ENCODE measurements at regions of chr12 and their contacts with region 1.

Region 1: GRCh38 chr12:89709157-89709994 is 738 bp upstream of the ATP2B1 start:
- DNase-seq: peak; percentile 95
- ATAC-seq: peak; percentile 76
- H3K4me3 ChIP-seq: peak overlapping the region; percentile 94
- H3K27ac ChIP-seq: peak overlapping the region; percentile 95
- H3K4me1 ChIP-seq: peaks cover 3% of the 10 kb centered on the region; the same call in 1 of the 2 replicates
- H3K27me3 ChIP-seq: no peaks in the 10 kb centered on the region
- CTCF ChIP-seq: 0 out of 6 replicates have a peak, but pooled peaks of 1 of the 3 experiments have one; percentile 10
- EP300 ChIP-seq: peak in 1 of 2 experiments; percentile 41; a peak in 3 of 4 replicates
- POLR2A ChIP-seq: peak; percentile 96
- RAD21 ChIP-seq: 0 out of 2 replicates have a peak, but pooled peaks have one; percentile 0

Region 2: DNA sequence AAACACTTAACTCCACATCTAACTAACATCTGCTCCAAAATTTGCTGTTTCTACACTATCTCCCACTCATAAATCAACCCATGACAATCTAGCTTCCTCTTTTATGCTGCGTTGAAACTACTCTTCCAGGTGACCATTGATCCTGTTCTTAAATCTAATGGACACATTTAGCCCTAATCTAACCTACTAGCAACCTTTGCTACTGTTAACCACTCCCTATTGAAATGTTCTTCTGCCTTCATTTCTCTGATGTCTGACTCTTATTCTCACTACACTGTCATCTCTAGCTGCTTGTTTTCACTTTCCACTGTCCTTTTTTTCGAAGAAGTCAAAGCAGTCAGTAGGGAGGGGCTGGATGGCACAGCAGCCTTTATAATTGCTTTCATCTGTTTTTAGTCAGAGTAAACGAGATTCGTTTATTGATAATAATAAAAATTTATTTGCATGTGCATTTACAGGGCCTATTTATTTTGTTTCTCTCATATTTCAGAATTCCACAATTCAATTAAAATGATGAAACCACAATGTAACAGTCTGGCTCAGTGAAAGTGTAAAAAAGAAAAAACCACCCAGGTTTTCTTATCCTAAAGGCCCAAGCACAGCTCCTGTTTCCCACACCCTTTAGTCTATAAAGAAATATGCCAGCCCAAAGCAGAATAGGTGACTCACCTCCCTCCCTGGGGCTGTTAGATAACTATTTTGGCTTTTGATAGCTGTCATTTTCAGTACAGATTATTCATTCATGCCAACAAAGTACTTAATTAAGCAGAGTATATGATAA is 45.6 kb before region 1 on chr12:
- CTCF ChIA-PET with region 1: interaction called, 7 read pairs
- POLR2A ChIA-PET with region 1: interaction called, 6 read pairs
- RAD21 ChIA-PET with region 1: interaction called, 26 read pairs
- SMC1A ChIA-PET with region 1: interaction called, 70 read pairs
- in situ Hi-C with region 1: no loop called
- intact Hi-C with region 1: loop called (anchors 2 kb)
- DNase-seq: peak; percentile 37
- ATAC-seq: peak; percentile 79
- H3K4me3 ChIP-seq: peak overlapping the region; percentile 3; the same call in 1 of the 2 replicates
- H3K27ac ChIP-seq: peak overlapping the region; percentile 5; the same call in 1 of the 2 replicates
- H3K4me1 ChIP-seq: peaks cover 26% of the 10 kb centered on the region; the same call in 1 of the 2 replicates
- H3K27me3 ChIP-seq: no peaks in the 10 kb centered on the region
- CTCF ChIP-seq: no peak
- EP300 ChIP-seq: no peak
- POLR2A ChIP-seq: no peak
- RAD21 ChIP-seq: no peak

Region 3: DNA sequence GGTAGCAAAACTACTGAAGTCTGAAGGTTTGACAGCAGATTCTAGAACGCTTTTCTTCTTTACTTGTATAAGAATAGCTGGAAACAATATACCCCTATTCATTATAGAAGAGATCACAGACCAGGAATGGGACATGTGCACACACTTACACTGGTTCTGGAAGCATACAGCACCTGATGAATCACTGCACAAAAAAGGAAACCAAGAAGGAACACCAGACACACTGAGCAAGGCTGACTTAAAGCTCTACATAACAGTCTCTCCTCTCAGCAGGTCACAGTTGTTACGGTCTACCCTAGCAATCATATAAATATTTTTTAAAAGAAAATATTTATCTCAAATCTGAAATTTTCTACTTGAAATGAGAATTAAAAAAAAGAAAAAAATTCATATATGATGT is 14.3 kb before region 1 on chr12:
- CTCF ChIA-PET with region 1: interaction called, 18 read pairs
- POLR2A ChIA-PET with region 1: interaction called, 12 read pairs
- RAD21 ChIA-PET with region 1: interaction called, 41 read pairs
- SMC1A ChIA-PET with region 1: interaction called, 31 read pairs
- in situ Hi-C with region 1: no loop called
- intact Hi-C with region 1: no loop called
- DNase-seq: no peak
- ATAC-seq: peak; percentile 18
- H3K4me3 ChIP-seq: no peak overlapping the region
- H3K27ac ChIP-seq: no peak overlapping the region
- H3K4me1 ChIP-seq: peaks cover 9% of the 10 kb centered on the region
- H3K27me3 ChIP-seq: no peaks in the 10 kb centered on the region
- CTCF ChIP-seq: no peak
- EP300 ChIP-seq: no peak
- POLR2A ChIP-seq: no peak
- RAD21 ChIP-seq: no peak

Region 4: DNA sequence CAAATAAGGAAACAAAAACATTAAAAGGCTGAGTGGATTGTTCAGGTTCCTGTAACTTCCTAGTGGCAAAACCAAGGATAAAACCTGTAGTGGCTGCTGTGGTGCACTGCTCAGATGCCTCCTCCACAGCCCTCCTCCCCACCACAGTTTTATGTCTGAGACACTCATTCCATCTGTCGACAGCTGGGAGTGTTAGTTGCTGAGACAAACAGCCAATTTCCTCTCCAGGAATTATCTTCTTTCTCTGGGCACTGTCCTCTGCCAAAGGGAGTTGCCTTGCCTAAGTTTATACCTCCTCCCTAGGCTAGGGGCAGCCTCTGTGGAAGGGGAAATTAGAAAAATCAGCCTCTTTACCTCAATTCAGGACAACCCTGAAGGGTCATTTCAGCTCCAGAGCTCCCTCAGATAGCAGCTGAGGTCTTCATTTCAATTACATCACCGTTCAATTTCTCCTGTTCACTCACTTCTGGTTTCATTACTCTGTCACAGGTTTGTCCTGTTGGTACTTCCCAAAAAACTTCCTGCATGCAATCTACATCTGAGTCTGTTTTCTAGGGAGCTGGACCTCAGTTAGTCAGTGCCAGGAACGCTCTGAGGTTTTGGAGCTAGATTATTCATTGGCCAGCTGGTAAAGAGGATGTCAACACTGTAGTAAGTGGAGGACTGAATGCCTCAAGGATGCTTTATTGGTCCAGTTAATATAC is 74.1 kb after region 1 on chr12:
- CTCF ChIA-PET with region 1: no interaction called
- POLR2A ChIA-PET with region 1: no interaction called
- RAD21 ChIA-PET with region 1: no interaction called
- SMC1A ChIA-PET with region 1: no interaction called
- in situ Hi-C with region 1: no loop called
- intact Hi-C with region 1: no loop called
- DNase-seq: no peak
- ATAC-seq: peak; percentile 66
- H3K4me3 ChIP-seq: no peak overlapping the region
- H3K27ac ChIP-seq: no peak overlapping the region
- H3K4me1 ChIP-seq: peaks cover 4% of the 10 kb centered on the region
- H3K27me3 ChIP-seq: no peaks in the 10 kb centered on the region
- CTCF ChIP-seq: no peak
- EP300 ChIP-seq: no peak
- POLR2A ChIP-seq: no peak
- RAD21 ChIP-seq: no peak

Region 5: DNA sequence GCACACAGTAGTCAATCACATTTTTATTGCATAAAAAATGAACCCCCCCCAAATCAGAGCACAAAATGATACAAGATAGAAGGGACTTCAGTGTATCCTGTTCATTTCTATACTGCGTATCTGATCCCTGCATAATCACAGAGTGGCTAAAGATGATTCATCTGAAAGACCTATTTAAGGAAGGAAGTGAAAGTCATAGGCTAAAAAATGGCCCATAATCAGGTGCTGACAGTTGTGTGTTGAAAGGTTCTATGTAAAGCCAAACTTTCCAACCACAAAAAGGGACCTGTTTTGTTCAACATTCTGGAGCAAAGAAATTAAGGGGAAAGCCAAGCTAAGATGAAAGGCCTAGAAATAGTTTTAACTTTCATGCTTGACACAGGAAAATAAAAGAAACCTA is 147.1 kb after region 1 on chr12:
- CTCF ChIA-PET with region 1: interaction called, 6 read pairs
- POLR2A ChIA-PET with region 1: interaction called, 11 read pairs
- RAD21 ChIA-PET with region 1: interaction called, 13 read pairs
- SMC1A ChIA-PET with region 1: interaction called, 5 read pairs
- in situ Hi-C with region 1: no loop called
- intact Hi-C with region 1: loop called (anchors 1 kb)
- DNase-seq: peak; percentile 85
- ATAC-seq: peak; percentile 90
- H3K4me3 ChIP-seq: no peak overlapping the region
- H3K27ac ChIP-seq: peak overlapping the region; percentile 42
- H3K4me1 ChIP-seq: peaks cover 43% of the 10 kb centered on the region
- H3K27me3 ChIP-seq: no peaks in the 10 kb centered on the region
- CTCF ChIP-seq: no peak
- EP300 ChIP-seq: peak; percentile 97
- POLR2A ChIP-seq: no peak
- RAD21 ChIP-seq: peak; percentile 27; the same call in 1 of the 2 replicates

Region 6: GRCh38 chr12:89927226-89927698 is 217.9 kb after region 1 on chr12:
- CTCF ChIA-PET with region 1: interaction called, 9 read pairs
- POLR2A ChIA-PET with region 1: interaction called, 18 read pairs
- RAD21 ChIA-PET with region 1: interaction called, 24 read pairs
- SMC1A ChIA-PET with region 1: interaction called, 17 read pairs
- in situ Hi-C with region 1: no loop called
- intact Hi-C with region 1: loop called (anchors 2 kb)
- DNase-seq: peak; percentile 79
- ATAC-seq: peak; percentile 91
- H3K4me3 ChIP-seq: peak overlapping the region; percentile 67
- H3K27ac ChIP-seq: peak overlapping the region; percentile 96
- H3K4me1 ChIP-seq: peaks cover 3% of the 10 kb centered on the region; the same call in 1 of the 2 replicates
- H3K27me3 ChIP-seq: no peaks in the 10 kb centered on the region
- CTCF ChIP-seq: no peak
- EP300 ChIP-seq: peak; percentile 85 to 97; a peak in 3 of 4 replicates
- POLR2A ChIP-seq: no peak
- RAD21 ChIP-seq: peak; percentile 29; the same call in 1 of the 2 replicates

Region 7: DNA sequence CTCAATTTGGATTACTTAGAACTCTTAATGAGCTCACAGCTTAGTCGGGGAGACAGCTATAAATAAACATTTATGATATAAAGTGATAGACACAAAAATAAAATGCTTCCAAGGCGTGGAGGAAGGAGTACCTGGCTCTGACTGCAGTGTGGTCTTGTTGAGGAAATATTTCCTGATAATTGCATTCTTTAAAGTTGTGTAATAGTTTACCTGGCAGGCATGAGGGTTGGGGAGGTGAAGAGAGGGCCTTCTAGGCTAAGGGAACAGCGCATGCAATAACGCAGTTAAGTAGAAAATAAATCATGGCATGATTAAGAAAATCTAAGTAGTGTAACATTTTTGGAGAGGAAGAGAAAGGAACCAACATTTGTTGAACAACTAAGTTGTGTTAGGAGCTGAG is 259.7 kb after region 1 on chr12:
- CTCF ChIA-PET with region 1: no interaction called
- POLR2A ChIA-PET with region 1: no interaction called
- RAD21 ChIA-PET with region 1: no interaction called
- SMC1A ChIA-PET with region 1: no interaction called
- in situ Hi-C with region 1: no loop called
- intact Hi-C with region 1: no loop called
- DNase-seq: no peak
- ATAC-seq: no peak
- H3K4me3 ChIP-seq: no peak overlapping the region
- H3K27ac ChIP-seq: no peak overlapping the region
- H3K4me1 ChIP-seq: no peaks in the 10 kb centered on the region
- H3K27me3 ChIP-seq: no peaks in the 10 kb centered on the region
- CTCF ChIP-seq: no peak
- EP300 ChIP-seq: no peak
- POLR2A ChIP-seq: no peak
- RAD21 ChIP-seq: no peak

Region 8: DNA sequence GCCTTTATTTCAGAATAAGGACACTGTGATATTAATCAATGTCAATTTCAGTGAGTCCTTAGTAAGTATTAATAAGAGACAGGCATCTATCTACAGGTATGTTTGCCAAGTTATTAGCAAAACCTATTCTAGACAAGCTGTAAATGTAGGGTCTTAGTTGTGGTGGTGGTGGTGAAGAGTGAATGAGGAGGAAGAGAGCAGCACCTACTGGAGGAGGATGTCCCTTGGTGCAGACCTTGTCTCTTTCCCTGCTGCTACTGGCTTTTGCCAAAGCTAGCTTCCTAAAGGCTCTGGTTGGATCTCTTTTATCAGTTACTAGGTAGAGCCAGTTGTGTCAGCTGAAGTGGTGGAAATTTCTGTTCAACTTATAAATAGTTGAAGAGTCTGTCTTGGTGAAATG is 304.0 kb after region 1 on chr12:
- CTCF ChIA-PET with region 1: interaction called, 5 read pairs
- POLR2A ChIA-PET with region 1: interaction called, 7 read pairs
- RAD21 ChIA-PET with region 1: interaction called, 18 read pairs
- SMC1A ChIA-PET with region 1: interaction called, 21 read pairs
- in situ Hi-C with region 1: no loop called
- intact Hi-C with region 1: loop called (anchors 5 kb)
- DNase-seq: peak; percentile 8
- ATAC-seq: peak; percentile 94
- H3K4me3 ChIP-seq: no peak overlapping the region
- H3K27ac ChIP-seq: no peak overlapping the region
- H3K4me1 ChIP-seq: no peaks in the 10 kb centered on the region
- H3K27me3 ChIP-seq: no peaks in the 10 kb centered on the region
- CTCF ChIP-seq: peak; percentile 45 to 73 (median 54); a peak in 5 of 6 replicates
- EP300 ChIP-seq: no peak
- POLR2A ChIP-seq: no peak
- RAD21 ChIP-seq: peak; percentile 60

Region 9: DNA sequence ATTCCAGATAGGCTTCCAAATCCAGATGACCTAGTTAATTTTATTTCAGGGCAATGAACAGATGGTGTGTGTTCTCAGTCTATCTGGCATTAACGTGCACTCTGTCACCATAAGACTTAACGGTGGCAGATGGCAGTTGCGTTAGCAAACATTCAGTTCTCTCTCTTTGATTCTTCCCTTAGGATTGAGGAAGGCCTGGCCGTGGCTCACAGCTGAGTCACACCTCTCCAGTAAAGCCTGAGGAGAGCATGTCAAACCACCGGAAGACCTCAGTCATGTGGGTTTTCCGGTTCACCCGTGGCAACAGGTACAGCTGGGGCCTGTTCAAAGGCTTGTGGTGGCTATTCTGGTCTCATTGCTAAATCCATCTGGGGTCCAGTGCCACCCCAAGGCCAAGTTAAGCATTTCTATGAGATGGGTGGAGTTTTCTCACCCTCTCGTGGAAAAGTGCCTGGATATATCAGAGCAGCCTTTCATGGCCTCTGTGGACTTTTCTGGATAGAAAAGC is 544.4 kb after region 1 on chr12:
- CTCF ChIA-PET with region 1: no interaction called
- POLR2A ChIA-PET with region 1: no interaction called
- RAD21 ChIA-PET with region 1: no interaction called
- SMC1A ChIA-PET with region 1: no interaction called
- in situ Hi-C with region 1: no loop called
- intact Hi-C with region 1: loop called (anchors 5 kb)
- DNase-seq: peak; percentile 59
- ATAC-seq: peak; percentile 99
- H3K4me3 ChIP-seq: no peak overlapping the region
- H3K27ac ChIP-seq: no peak overlapping the region
- H3K4me1 ChIP-seq: peaks cover 5% of the 10 kb centered on the region; the same call in 1 of the 2 replicates
- H3K27me3 ChIP-seq: no peaks in the 10 kb centered on the region
- CTCF ChIP-seq: peak; percentile 39 to 47 (median 39); a peak in 5 of 6 replicates
- EP300 ChIP-seq: peak in 1 of 2 experiments; percentile 62; a peak in 1 of 4 replicates
- POLR2A ChIP-seq: no peak
- RAD21 ChIP-seq: peak; percentile 73